CD4-positive, alpha-beta T cell (primary cell): ENCODE measurements at regions of chr4 and their contacts with region 1.

Region 1: DNA sequence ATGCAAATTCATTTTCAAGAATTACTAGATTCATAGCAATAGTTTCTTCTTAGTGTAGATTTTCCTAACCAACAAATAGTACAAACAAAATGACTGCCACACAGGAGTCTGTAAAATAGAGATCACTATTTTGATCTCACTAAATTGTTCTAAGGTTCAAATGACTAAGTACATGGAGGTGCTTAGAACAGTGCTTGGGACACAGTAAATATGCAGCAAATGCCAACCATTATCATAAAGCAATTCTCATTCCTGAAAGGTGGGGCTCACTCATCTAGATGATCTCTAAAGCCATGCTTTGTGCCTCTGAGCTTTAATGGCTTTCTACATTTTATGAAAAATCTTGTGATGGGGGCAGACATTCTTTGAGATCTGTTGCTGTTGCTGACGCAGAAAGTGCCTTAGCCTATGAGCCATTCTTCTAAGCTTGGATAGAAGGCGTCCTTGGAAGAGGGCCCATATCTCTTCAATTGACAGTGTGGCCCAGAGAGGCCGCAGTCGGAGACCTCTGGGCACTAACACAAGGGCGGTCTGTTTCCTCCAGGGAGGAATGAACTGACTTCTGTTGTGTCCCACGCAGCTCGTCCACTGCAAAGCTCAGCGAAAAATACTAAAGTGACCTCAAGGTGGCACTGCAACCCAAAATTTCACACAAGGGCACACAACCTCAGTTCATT is 23.5 kb downstream of the TLR10 start:
- DNase-seq: peak; percentile 30 to 83 (median 54)
- ATAC-seq: peak; percentile 58
- H3K4me3 ChIP-seq: no peak overlapping the region
- H3K4me3 Mint-ChIP-seq: no peak overlapping the region
- H3K27ac ChIP-seq: no peak overlapping the region
- H3K27ac Mint-ChIP-seq: no peak overlapping the region
- H3K4me1 ChIP-seq: peaks cover 11% of the 10 kb centered on the region
- H3K4me1 Mint-ChIP-seq: peaks cover 14% of the 10 kb centered on the region
- H3K27me3 ChIP-seq: no peaks in the 10 kb centered on the region
- H3K27me3 Mint-ChIP-seq: no peaks in the 10 kb centered on the region
- CTCF ChIP-seq: peak; percentile 79

Region 2: DNA sequence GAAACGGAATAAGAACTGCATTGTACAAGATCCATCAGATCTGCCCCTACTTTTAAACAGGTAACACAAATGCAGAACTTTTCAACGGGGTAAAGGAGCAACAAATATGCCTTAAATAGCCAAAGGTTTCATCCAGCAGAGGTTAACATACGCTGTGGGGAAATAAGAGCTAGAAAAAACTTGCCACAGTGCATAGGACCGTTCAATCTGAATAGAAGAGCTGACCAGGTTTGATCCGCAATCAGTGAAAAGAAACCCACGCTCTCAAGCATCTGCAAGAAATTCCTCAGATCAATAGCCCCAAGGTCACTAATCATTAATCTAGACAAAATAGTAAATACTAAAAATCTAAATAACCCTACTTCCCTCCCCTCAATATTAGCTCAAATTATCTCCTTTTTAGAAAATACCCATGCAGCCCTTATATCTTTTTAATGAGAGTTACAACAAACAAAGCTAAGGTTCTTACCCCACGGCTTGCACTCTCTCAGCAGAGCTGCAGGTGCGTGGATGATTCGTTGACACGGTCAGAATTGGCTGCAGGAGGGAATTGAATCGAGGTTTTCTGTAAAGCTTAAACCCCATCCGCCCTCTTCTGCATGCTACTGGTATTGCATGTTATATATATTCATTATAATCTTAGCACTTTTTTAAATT is 23.3 kb after region 1 on chr4 and contains the start of gene TLR10:
- CTCF ChIA-PET with region 1: interaction called, 17 read pairs
- POLR2A ChIA-PET with region 1: interaction called, 6 read pairs
- intact Hi-C with region 1: loop called in 1 of 2 experiments (anchors 1 kb)
- DNase-seq: peak in 7 of 14 experiments; percentile 14 to 75 (median 60)
- ATAC-seq: peak; percentile 77
- H3K4me3 ChIP-seq: no peak within 1 kb of the TSS
- H3K4me3 Mint-ChIP-seq: no peak within 1 kb of the TSS
- H3K27ac ChIP-seq: no peak within 1 kb of the TSS
- H3K27ac Mint-ChIP-seq: no peak within 1 kb of the TSS
- H3K4me1 ChIP-seq: peaks cover 4% of the 10 kb centered on the region
- H3K4me1 Mint-ChIP-seq: peaks cover 6% of the 10 kb centered on the region
- H3K27me3 ChIP-seq: no peaks in the 10 kb centered on the region
- H3K27me3 Mint-ChIP-seq: no peaks in the 10 kb centered on the region
- CTCF ChIP-seq: peak; percentile 78
- total RNA-seq, gene TLR10: not detected

Region 3: GRCh38 chr4:38804654-38805295 is 45.5 kb after region 1 on chr4 and contains the start of gene TLR1:
- CTCF ChIA-PET with region 1: interaction called, 7 read pairs
- POLR2A ChIA-PET with region 1: no interaction called
- intact Hi-C with region 1: loop called (anchors 2 to 5 kb)
- DNase-seq: peak in 4 of 14 experiments; percentile 5 to 82 (median 78)
- ATAC-seq: peak; percentile 84
- H3K4me3 ChIP-seq: peak within 1 kb of the TSS; percentile 55
- H3K4me3 Mint-ChIP-seq: peak within 1 kb of the TSS; percentile 86
- H3K27ac ChIP-seq: peak within 1 kb of the TSS; percentile 42 to 54
- H3K27ac Mint-ChIP-seq: peak within 1 kb of the TSS; percentile 88
- H3K4me1 ChIP-seq: peaks cover 27% of the 10 kb centered on the region
- H3K4me1 Mint-ChIP-seq: peaks cover 41% of the 10 kb centered on the region
- H3K27me3 ChIP-seq: no peaks in the 10 kb centered on the region
- H3K27me3 Mint-ChIP-seq: no peaks in the 10 kb centered on the region
- CTCF ChIP-seq: peak; percentile 70
- total RNA-seq, gene TLR1: 16.2 to 16.3 TPM

Region 4: DNA sequence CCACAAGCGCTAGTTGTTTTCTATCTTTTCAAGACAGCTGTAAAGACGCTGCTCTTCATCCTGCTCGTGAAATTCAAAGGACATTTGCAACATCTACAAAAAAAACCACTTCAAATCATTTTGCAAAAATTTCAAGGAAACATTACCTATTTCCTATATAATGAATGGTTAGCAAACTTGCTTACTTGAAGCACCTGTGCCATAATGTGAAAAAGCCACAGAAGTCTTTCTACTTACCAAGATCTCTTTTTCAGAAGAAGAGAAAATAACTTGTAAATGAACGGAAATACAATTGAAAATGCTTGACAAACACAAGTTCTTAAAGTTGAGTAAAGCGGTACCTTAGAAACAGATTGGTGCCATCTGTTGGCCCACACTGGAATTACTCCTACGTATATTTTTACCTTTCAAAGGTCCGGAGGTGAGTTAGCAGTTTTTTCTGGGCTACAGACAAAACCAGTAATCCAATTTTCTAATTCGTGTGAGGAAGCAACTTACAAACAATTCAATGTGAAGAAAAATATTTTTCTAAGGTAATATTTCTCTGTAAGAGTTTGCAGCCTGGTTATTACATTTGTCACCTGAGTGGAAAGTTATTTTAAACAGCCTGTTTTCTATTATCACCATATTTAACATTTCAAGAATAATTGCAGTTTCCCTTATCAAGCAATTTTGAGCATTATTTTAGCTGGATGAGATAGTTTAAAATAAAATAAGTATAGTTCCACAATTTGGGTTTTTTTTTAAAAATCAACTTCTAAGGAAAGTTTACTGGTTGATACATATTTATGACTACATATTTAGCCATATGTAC is 97.5 kb after region 1 on chr4 and contains the start of gene TLR6:
- CTCF ChIA-PET with region 1: interaction called, 30 read pairs
- POLR2A ChIA-PET with region 1: interaction called, 7 read pairs
- intact Hi-C with region 1: loop called (anchors 1 kb)
- DNase-seq: peak in 13 of 14 experiments; percentile 31 to 87 (median 60)
- ATAC-seq: peak; percentile 80
- H3K4me3 ChIP-seq: peak within 1 kb of the TSS; percentile 50
- H3K4me3 Mint-ChIP-seq: peak within 1 kb of the TSS; percentile 69
- H3K27ac ChIP-seq: peak within 1 kb of the TSS; percentile 40 to 44
- H3K27ac Mint-ChIP-seq: peak within 1 kb of the TSS; percentile 78
- H3K4me1 ChIP-seq: peaks cover 18% of the 10 kb centered on the region
- H3K4me1 Mint-ChIP-seq: peaks cover 38% of the 10 kb centered on the region
- H3K27me3 ChIP-seq: no peaks in the 10 kb centered on the region
- H3K27me3 Mint-ChIP-seq: no peaks in the 10 kb centered on the region
- CTCF ChIP-seq: peak; percentile 92
- total RNA-seq, gene TLR6: 0.69 to 1.3 TPM

Region 5: DNA sequence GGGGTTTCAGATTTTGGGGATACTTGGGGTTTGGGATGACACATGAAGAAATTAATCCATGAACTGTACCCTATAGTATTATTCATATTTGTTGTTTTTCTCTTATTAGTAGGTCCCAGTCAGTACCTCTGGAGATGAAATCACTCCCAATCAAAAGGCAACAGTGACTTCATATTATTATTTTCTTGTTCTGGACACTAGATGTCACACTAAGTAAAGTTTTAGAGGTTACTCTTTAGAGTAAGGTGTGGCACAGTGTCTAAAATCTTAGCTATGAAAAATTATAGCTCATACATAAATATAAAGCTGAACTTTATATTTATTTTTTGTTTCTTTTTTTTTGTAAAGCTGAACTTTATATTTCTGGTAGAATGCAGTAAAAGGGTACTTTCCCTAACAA is 143.4 kb after region 1 on chr4:
- CTCF ChIA-PET with region 1: interaction called, 3 read pairs
- POLR2A ChIA-PET with region 1: interaction called, 3 read pairs
- intact Hi-C with region 1: loop called (anchors 1 to 2 kb)
- DNase-seq: peak in 3 of 14 experiments; percentile 64 to 67 (median 66)
- ATAC-seq: peak; percentile 89
- H3K4me3 ChIP-seq: no peak overlapping the region
- H3K4me3 Mint-ChIP-seq: no peak overlapping the region
- H3K27ac ChIP-seq: no peak overlapping the region
- H3K27ac Mint-ChIP-seq: no peak overlapping the region
- H3K4me1 ChIP-seq: no peaks in the 10 kb centered on the region
- H3K4me1 Mint-ChIP-seq: no peaks in the 10 kb centered on the region
- H3K27me3 ChIP-seq: no peaks in the 10 kb centered on the region
- H3K27me3 Mint-ChIP-seq: peaks cover 4% of the 10 kb centered on the region
- CTCF ChIP-seq: peak; percentile 70

Region 6: GRCh38 chr4:39134683-39135319 is 375.6 kb after region 1 on chr4:
- CTCF ChIA-PET with region 1: interaction called, 6 read pairs
- POLR2A ChIA-PET with region 1: no interaction called
- intact Hi-C with region 1: loop called (anchors 2 kb)
- DNase-seq: peak in 1 of 14 experiments; percentile 3
- ATAC-seq: no peak
- H3K4me3 ChIP-seq: no peak overlapping the region
- H3K4me3 Mint-ChIP-seq: no peak overlapping the region
- H3K27ac ChIP-seq: no peak overlapping the region
- H3K27ac Mint-ChIP-seq: no peak overlapping the region
- H3K4me1 ChIP-seq: peaks cover 6% of the 10 kb centered on the region
- H3K4me1 Mint-ChIP-seq: peaks cover 12% of the 10 kb centered on the region
- H3K27me3 ChIP-seq: no peaks in the 10 kb centered on the region
- H3K27me3 Mint-ChIP-seq: no peaks in the 10 kb centered on the region
- CTCF ChIP-seq: no peak